Mammary epithelial cell (primary cell): ENCODE measurements at regions of chr3 and their contacts with region 1.

Region 1: DNA sequence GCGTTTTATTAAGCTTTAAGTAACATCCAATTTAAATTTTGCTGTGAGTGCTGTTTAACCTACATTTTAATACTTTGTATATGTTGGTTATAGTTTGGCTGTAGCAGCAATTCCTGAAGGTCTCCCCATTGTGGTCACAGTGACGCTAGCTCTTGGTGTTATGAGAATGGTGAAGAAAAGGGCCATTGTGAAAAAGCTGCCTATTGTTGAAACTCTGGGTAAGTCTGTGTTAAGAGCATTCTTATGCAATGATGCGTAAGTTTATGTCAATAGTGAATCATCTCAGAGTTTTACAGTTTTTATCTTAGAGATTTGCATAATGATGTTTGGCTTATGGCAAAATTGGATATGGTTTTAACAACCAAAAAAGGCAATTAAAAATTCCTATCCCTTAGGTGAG is 62.7 kb downstream of the ASTE1 start:
- DNase-seq: peak; percentile 97
- H3K4me3 ChIP-seq: no peak overlapping the region
- H3K27ac ChIP-seq: peak overlapping the region; percentile 100
- H3K4me1 ChIP-seq: peaks cover 16% of the 10 kb centered on the region
- H3K27me3 ChIP-seq: no peaks in the 10 kb centered on the region
- CTCF ChIP-seq: no peak

Region 2: GRCh38 chr3:130746246-130747039 is 217.4 kb before region 1 on chr3 and contains the start of gene PIK3R4:
- CTCF ChIA-PET with region 1: no interaction called
- dilution Hi-C with region 1: no loop called
- in situ Hi-C with region 1: no loop called
- intact Hi-C with region 1: loop called (anchors 2 kb)
- DNase-seq: peak; percentile 99
- H3K4me3 ChIP-seq: peak within 1 kb of the TSS; percentile 86 to 97 (median 86)
- H3K27ac ChIP-seq: peak within 1 kb of the TSS; percentile 92
- H3K4me1 ChIP-seq: peaks cover 18% of the 10 kb centered on the region
- H3K27me3 ChIP-seq: no peaks in the 10 kb centered on the region
- CTCF ChIP-seq: no peak
- total RNA-seq, gene PIK3R4: 19.1 to 31.5 TPM